Upper lobe of right lung (tissue), 1 donor: ENCODE measurements at regions of chr2 and their contacts with region 1.

Region 1: DNA sequence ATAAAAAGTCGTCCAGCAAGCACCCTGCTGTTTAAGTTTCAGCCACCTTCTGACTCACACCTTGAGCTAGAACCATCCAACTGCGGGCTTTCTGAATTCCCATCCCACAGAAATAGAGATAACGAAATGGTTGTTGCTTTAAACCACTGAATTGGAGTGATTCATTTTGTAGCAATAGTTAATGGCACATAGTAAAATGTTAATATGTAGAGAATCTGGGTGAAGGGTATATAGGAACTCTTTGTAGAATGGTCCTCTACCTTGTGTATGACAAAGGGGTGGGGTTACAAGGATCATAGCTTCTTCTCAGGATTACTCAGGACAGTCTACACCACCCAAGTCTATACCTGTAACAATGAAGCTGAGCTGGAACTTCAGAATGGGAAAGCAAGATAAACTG is 2.4 kb upstream of the MAPRE3 start:
- DNase-seq: no peak
- ATAC-seq: no peak
- H3K4me3 ChIP-seq: no peak overlapping the region
- H3K27ac ChIP-seq: no peak overlapping the region
- H3K4me1 ChIP-seq: peaks cover 14% of the 10 kb centered on the region
- H3K27me3 ChIP-seq: no peaks in the 10 kb centered on the region
- CTCF ChIP-seq: no peak

Region 2: GRCh38 chr2:27016801-27017325 is 48.9 kb after region 1 on chr2:
- intact Hi-C with region 1: loop called (anchors 10 kb)
- DNase-seq: no peak
- ATAC-seq: peak; percentile 72
- H3K4me3 ChIP-seq: no peak overlapping the region
- H3K27ac ChIP-seq: peak overlapping the region; percentile 58
- H3K4me1 ChIP-seq: peaks cover 7% of the 10 kb centered on the region
- H3K27me3 ChIP-seq: no peaks in the 10 kb centered on the region
- CTCF ChIP-seq: peak; percentile 64

Region 3: DNA sequence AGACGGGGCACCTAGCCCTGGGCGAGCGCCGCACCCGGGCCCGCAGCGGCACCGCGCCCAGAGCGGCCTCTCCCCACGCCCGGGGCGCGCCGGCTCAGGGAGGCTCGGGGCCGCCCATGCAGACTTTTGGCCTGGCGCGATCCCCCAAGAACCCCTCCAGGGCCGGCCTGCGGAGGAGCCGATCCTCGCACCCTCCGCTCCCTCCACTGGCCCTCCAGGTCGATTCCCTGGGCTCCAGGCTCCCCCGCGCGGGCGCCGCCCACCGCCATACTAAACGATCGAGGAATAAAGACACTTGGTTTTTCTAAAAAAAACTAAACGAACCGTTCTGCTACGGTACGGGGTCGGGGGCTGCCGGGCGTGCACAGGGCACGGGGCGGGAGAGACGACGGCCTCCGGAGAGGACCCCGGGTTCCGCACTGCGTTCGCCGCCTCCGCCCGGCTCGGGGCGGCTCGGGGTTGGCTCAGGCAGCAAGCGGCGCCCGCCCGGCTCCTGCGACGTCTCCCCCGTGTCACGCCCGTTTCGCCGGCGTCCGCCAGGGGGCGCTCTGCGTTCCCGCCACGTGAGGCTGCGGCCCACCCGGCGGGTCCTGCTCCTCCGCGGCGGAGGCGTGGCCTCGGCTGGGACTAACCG is 118.2 kb after region 1 on chr2:
- intact Hi-C with region 1: loop called (anchors 10 kb)
- DNase-seq: peak; percentile 99
- ATAC-seq: peak; percentile 95
- H3K4me3 ChIP-seq: peak overlapping the region; percentile 74
- H3K27ac ChIP-seq: peak overlapping the region; percentile 95
- H3K4me1 ChIP-seq: peaks cover 30% of the 10 kb centered on the region
- H3K27me3 ChIP-seq: no peaks in the 10 kb centered on the region
- CTCF ChIP-seq: peak; percentile 91